ENCODE measurements at regions of chr17 and their contacts with region 1.

Region 1: GRCh38 chr17:60305141-60305540 is 86.8 kb downstream of the USP32 start:
- DNase-seq: no peak
- ATAC-seq: peak; percentile 98
- H3K4me3 Mint-ChIP-seq: peak overlapping the region; percentile 63
- H3K27ac Mint-ChIP-seq: peak overlapping the region; percentile 82
- H3K4me1 Mint-ChIP-seq: peaks cover 26% of the 10 kb centered on the region
- H3K27me3 Mint-ChIP-seq: no peaks in the 10 kb centered on the region
- CTCF ChIP-seq: no peak

Region 2: GRCh38 chr17:60321336-60322055 is 16.4 kb after region 1 on chr17:
- CTCF ChIA-PET with region 1: no interaction called
- POLR2A ChIA-PET with region 1: no interaction called
- intact Hi-C with region 1: loop called (anchors 2 kb)
- DNase-seq: no peak
- ATAC-seq: no peak
- H3K4me3 Mint-ChIP-seq: no peak overlapping the region
- H3K27ac Mint-ChIP-seq: no peak overlapping the region
- H3K4me1 Mint-ChIP-seq: peaks cover 18% of the 10 kb centered on the region
- H3K27me3 Mint-ChIP-seq: no peaks in the 10 kb centered on the region
- CTCF ChIP-seq: no peak

Region 3: GRCh38 chr17:60525685-60526514 is 220.8 kb after region 1 on chr17 and contains the start of gene APPBP2:
- CTCF ChIA-PET with region 1: no interaction called
- POLR2A ChIA-PET with region 1: no interaction called
- intact Hi-C with region 1: loop called (anchors 1 kb)
- DNase-seq: peak; percentile 76
- ATAC-seq: peak; percentile 84
- H3K4me3 Mint-ChIP-seq: peak within 1 kb of the TSS; percentile 96
- H3K27ac Mint-ChIP-seq: peak within 1 kb of the TSS; percentile 93
- H3K4me1 Mint-ChIP-seq: peaks cover 42% of the 10 kb centered on the region
- H3K27me3 Mint-ChIP-seq: no peaks in the 10 kb centered on the region
- CTCF ChIP-seq: no peak
- total RNA-seq, gene APPBP2: 25.5 and 29.9 TPM in 2 replicates

Measured in activated B cell treated with CpG ODN at 0.5 μM for 24 hours (primary cell).